ENCODE measurements at regions of chr19 and their contacts with region 1.

Region 1: GRCh38 chr19:24159707-24160106 is 72.7 kb downstream of the ZNF254 start:
- DNase-seq: no peak

Region 2: GRCh38 chr19:24178207-24178606 is 18.5 kb after region 1 on chr19:
- intact Hi-C with region 1: loop called in 1 of 2 experiments (anchors 1 kb)
- DNase-seq: no peak

Measured in posterior vena cava (tissue), 2 donors.